Motor neuron (in vitro differentiated cells): ENCODE measurements at regions of chr17 and their contacts with region 1.

Region 1: DNA sequence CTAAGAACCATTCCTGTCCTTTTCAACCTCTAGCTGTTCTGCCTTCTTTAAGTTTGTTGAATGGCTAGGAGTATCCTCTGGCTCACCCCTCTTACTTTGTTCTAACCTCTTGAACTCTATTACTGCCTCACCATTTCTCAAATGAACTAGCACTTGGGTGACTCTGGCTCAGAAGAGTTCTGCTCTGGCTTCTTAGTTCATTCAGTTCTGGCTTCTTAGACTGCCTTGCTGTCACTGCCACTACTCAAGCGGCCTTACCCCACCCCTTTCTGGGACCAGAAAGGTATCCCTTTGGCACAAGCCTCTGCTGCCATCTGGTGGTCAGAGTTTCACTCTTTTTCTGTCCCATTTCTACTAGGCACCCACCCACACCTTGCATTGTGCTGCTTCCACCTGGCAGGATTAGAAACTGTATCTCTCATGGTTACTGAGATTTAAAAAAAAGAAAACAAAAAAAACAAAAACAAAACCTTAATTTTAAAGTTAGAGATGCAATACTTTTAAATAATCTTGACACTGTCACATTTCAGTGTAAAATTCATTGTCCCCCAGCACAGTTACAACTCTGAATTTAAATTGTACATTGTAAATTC is 6.8 kb upstream of the ABCA10 start:
- ATAC-seq: peak; percentile 86 to 98 (median 94)
- H3K4me3 ChIP-seq: no peak overlapping the region
- H3K27ac ChIP-seq: no peak overlapping the region
- H3K4me1 ChIP-seq: no peaks in the 10 kb centered on the region

Region 2: GRCh38 chr17:68759343-68760132 is 475.9 kb before region 1 on chr17:
- in situ Hi-C with region 1: loop called in 1 of 9 experiments (anchors 25 kb)
- ATAC-seq: peak; percentile 93 to 99 (median 96)
- H3K4me3 ChIP-seq: peak overlapping the region in 3 of 5 donors; percentile 9 to 22 (median 18)
- H3K27ac ChIP-seq: peak overlapping the region; percentile 14 to 50
- H3K4me1 ChIP-seq: peaks cover 6 to 8% of the 10 kb centered on the region in 2 donors

Region 3: DNA sequence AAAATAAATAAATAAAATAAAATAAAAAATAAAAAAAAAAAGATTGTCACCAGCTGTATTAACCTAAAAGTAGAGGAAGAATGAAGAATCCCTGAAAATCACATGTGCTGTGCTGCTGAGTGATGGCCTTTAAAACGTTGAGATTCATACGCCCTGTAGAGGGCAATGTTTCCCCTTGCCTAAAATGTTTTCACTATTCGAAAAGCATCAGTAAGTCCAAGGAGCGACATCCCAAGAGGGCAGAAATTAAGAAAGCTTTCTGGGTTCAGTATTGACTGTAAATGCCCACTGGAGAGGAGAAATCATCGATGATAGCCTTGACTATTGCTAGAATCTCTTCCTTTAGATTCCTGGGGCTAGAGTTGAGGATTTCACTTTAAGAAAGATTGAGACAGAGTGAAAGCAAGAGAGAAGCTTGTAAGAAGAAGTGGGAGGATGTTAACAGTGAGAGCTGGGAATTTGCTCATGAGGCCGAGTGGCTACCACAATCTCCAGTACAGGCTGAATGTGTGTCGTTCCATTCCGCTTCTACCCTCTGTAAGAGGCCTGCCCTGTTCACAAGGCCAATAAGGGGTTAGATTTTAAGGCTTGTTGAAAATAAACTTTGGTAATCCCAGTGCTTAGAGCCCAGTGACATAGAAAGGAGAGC is 463.4 kb before region 1 on chr17:
- in situ Hi-C with region 1: loop called (anchors 10 to 25 kb)
- ATAC-seq: peak in 3 of 8 experiments; percentile 85 to 93 (median 92)
- H3K4me3 ChIP-seq: no peak overlapping the region
- H3K27ac ChIP-seq: no peak overlapping the region
- H3K4me1 ChIP-seq: no peaks in the 10 kb centered on the region

Region 4: DNA sequence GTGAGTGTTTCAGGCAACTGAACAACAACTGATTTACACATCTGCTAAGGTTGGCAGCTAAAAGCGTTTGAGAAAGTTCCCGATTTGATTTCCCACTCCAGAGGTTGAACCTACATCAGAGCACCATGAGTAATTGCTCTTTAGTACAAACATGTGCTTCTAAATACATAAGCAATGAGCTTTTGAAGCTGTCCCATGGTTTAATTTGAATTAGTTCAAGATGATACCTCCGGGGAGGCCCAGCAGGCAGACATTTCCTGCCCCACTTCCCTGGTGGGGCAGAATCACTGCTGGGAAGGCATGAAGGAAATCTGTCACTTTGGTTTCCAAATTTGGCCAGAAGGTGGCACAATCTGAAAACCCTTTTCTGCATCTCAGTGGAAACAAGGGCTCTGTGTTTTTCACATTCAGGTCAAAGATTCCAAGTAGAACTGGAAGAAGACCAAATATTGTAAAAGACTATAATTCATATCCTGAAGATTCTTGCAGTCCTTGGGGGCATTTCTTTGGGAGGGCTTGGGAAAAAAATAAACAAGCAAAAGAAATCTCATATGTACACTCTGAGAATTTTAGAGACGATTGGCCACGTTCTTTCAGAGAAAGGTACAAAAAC is 458.1 kb before region 1 on chr17:
- in situ Hi-C with region 1: loop called (anchors 10 to 25 kb)
- ATAC-seq: peak in 4 of 8 experiments; percentile 43 to 87 (median 83)
- H3K4me3 ChIP-seq: no peak overlapping the region
- H3K27ac ChIP-seq: no peak overlapping the region
- H3K4me1 ChIP-seq: no peaks in the 10 kb centered on the region

Region 5: DNA sequence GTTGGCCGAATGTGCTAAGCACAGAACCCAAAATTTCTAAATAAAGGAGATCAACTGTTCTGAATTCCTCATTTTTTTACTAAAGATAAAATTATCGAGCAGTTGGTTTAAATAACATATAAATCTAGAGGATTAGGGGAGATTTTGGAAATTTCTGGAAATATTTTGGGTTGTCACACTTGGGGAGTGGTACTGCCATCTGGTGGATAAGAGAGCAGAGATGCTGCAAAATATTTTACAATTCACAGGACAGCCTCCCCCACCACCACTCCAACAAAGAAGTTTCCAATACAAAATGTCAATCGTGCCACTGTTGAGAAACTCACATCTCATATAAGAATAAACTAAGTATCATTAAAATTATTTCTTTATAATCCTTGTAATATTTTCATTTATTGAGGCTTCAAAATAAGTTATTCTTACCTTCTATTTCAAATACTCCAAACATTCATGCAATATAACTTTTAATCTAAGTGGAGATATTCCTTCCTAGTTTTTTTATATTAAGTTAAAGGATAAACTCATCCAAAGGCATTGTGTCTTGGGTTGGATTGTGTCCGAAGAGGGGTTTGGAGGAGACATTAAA is 263.2 kb before region 1 on chr17:
- in situ Hi-C with region 1: loop called in 3 of 9 experiments (anchors 25 kb)
- ATAC-seq: no peak
- H3K4me3 ChIP-seq: no peak overlapping the region
- H3K27ac ChIP-seq: no peak overlapping the region
- H3K4me1 ChIP-seq: no peaks in the 10 kb centered on the region

Region 6: GRCh38 chr17:68981288-68981687 is 254.1 kb before region 1 on chr17:
- in situ Hi-C with region 1: loop called in 1 of 9 experiments (anchors 25 kb)
- ATAC-seq: peak in 2 of 8 experiments; percentile 52 to 65
- H3K4me3 ChIP-seq: no peak overlapping the region
- H3K27ac ChIP-seq: no peak overlapping the region
- H3K4me1 ChIP-seq: no peaks in the 10 kb centered on the region